B cell (primary cell): ENCODE measurements at regions of chr3 and their contacts with region 1.

Region 1: GRCh38 chr3:180989291-180990163 is at the start of gene DNAJC19:
- DNase-seq: peak; percentile 95
- ATAC-seq: peak; percentile 97
- H3K4me3 ChIP-seq: peak within 1 kb of the TSS; percentile 75 to 99 (median 85)
- H3K4me3 Mint-ChIP-seq: peak within 1 kb of the TSS; percentile 96
- H3K27ac ChIP-seq: peak within 1 kb of the TSS; percentile 80
- H3K27ac Mint-ChIP-seq: peak within 1 kb of the TSS; percentile 97
- H3K4me1 ChIP-seq: peaks cover 15 to 17% of the 10 kb centered on the region in 2 donors
- H3K4me1 Mint-ChIP-seq: peaks cover 37% of the 10 kb centered on the region
- H3K27me3 ChIP-seq: no peaks in the 10 kb centered on the region
- H3K27me3 Mint-ChIP-seq: peaks cover 10% of the 10 kb centered on the region
- CTCF ChIP-seq: no peak
- total RNA-seq, gene DNAJC19: 48.9 and 50.3 TPM in 2 replicates

Region 2: DNA sequence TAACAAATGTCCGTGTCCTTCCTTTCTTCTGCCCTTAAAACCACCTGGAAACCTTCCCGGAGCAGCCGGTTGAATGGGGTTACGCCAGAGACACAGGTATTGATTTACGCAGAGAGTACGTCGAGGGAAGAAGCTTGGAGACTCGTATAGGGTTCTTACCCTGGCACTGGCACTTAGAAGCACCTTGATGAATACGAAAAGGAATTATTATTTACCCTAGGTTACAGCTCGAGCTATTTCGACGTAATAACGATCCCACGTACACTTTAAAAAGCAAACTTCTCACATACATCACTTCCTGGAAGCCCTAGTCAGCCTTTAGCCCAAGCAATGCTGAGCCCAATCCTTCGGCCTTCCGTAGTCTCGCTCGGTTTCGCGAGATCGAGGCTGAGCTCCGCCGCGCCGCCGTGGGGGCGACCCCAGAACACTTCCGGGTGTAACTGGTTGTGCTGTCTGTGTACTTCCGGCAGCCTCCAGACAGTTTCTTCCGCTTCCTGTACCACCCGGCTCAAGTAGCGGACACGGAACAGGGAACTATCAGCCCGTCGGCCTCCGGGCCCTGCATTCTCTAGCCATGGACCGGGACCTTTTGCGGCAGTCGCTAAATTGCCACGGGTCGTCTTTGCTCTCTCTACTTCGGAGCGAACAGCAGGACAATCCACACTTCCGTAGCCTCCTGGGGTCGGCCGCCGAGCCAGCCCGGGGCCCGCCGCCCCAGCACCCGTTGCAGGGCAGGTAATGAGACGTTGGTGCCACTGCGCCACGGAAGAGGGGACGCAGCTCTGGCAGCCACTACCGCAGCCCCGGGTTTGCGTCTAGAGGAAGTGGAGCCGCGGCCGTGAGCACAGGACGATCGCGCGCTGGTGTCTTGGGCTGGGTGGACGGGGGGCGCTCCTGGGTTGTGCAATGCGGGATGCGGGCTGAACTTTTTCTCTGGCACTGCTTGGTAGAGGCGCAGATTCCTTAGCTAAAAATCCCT is 387.6 kb before region 1 on chr3 and contains the start of gene TTC14:
- CTCF ChIA-PET with region 1: no interaction called
- POLR2A ChIA-PET with region 1: interaction called, 3 read pairs
- intact Hi-C with region 1: loop called (anchors 1 kb)
- DNase-seq: peak; percentile 96
- ATAC-seq: peak; percentile 88
- H3K4me3 ChIP-seq: peak within 1 kb of the TSS; percentile 75 to 86 (median 80)
- H3K4me3 Mint-ChIP-seq: peak within 1 kb of the TSS; percentile 93
- H3K27ac ChIP-seq: peak within 1 kb of the TSS; percentile 88 to 90
- H3K27ac Mint-ChIP-seq: peak within 1 kb of the TSS; percentile 98
- H3K4me1 ChIP-seq: peaks cover 12 to 17% of the 10 kb centered on the region in 2 donors
- H3K4me1 Mint-ChIP-seq: peaks cover 25% of the 10 kb centered on the region
- H3K27me3 ChIP-seq: peaks cover 0 to 4% (median 0%) of the 10 kb centered on the region in 4 experiments
- H3K27me3 Mint-ChIP-seq: peaks cover 24% of the 10 kb centered on the region
- CTCF ChIP-seq: no peak
- total RNA-seq, gene TTC14: 136 and 139 TPM in 2 replicates

Region 3: GRCh38 chr3:180912304-180913296 is 76.9 kb before region 1 on chr3 and contains the start of gene FXR1:
- CTCF ChIA-PET with region 1: interaction called, 5 read pairs
- POLR2A ChIA-PET with region 1: interaction called, 3 read pairs
- intact Hi-C with region 1: loop called (anchors 1 kb)
- DNase-seq: peak; percentile 95
- ATAC-seq: peak; percentile 90
- H3K4me3 ChIP-seq: peak within 1 kb of the TSS; percentile 67 to 99 (median 92)
- H3K4me3 Mint-ChIP-seq: peak within 1 kb of the TSS; percentile 95
- H3K27ac ChIP-seq: peak within 1 kb of the TSS; percentile 91 to 97
- H3K27ac Mint-ChIP-seq: peak within 1 kb of the TSS; percentile 97
- H3K4me1 ChIP-seq: peaks cover 22 to 27% of the 10 kb centered on the region in 2 donors
- H3K4me1 Mint-ChIP-seq: peaks cover 53% of the 10 kb centered on the region
- H3K27me3 ChIP-seq: no peaks in the 10 kb centered on the region
- H3K27me3 Mint-ChIP-seq: no peaks in the 10 kb centered on the region
- CTCF ChIP-seq: peak; percentile 72
- total RNA-seq, gene FXR1: 143 and 144 TPM in 2 replicates

Region 4: DNA sequence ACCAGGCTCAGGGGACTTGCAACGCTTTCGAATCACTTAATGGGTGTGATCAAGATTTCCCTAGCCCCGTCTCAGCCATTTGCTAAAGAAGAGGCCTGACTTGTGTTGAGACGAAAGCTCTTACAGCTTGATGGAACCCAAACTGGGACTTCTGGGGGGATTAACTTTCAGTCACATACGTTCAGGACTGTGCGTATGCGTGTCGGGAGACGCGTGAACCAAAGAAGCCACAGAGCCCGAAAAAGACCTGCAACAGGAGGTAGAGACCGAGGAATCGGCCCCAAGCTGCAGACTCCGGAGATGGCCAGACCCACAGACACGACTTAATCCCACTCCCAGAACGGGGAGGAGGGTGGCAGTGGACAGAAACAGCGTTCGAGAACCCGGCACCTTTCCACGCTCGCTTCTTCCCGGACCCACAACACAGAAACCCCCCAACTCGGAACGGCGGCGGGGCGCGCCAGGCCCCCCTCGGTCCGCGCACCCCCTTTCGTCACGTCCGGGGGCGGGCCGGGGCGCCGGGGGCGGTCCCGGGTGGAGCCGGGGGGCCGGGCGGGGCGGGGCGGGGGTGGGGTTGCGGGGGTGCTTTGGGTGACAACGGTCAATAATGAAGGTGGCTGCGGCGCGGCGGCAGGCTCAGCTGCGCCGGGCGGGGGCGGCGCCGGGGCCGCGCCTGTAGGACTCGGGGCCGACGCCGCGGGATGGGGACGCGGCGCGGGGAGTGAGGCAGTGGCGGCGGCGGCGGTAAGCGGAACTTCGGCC is 1803.6 kb after region 1 on chr3 and contains the start of gene ATP11B:
- CTCF ChIA-PET with region 1: no interaction called
- POLR2A ChIA-PET with region 1: no interaction called
- intact Hi-C with region 1: loop called (anchors 2 kb)
- DNase-seq: peak; percentile 91
- ATAC-seq: peak; percentile 79
- H3K4me3 ChIP-seq: peak within 1 kb of the TSS; percentile 78 to 99 (median 94)
- H3K4me3 Mint-ChIP-seq: peak within 1 kb of the TSS; percentile 100
- H3K27ac ChIP-seq: peak within 1 kb of the TSS; percentile 92 to 98
- H3K27ac Mint-ChIP-seq: peak within 1 kb of the TSS; percentile 100
- H3K4me1 ChIP-seq: peaks cover 34 to 40% of the 10 kb centered on the region in 2 donors
- H3K4me1 Mint-ChIP-seq: peaks cover 39% of the 10 kb centered on the region
- H3K27me3 ChIP-seq: no peaks in the 10 kb centered on the region
- H3K27me3 Mint-ChIP-seq: no peaks in the 10 kb centered on the region
- CTCF ChIP-seq: no peak
- total RNA-seq, gene ATP11B: 81.9 and 94.6 TPM in 2 replicates